ENCODE measurements at regions of chr12 and their contacts with region 1.

Region 1: DNA sequence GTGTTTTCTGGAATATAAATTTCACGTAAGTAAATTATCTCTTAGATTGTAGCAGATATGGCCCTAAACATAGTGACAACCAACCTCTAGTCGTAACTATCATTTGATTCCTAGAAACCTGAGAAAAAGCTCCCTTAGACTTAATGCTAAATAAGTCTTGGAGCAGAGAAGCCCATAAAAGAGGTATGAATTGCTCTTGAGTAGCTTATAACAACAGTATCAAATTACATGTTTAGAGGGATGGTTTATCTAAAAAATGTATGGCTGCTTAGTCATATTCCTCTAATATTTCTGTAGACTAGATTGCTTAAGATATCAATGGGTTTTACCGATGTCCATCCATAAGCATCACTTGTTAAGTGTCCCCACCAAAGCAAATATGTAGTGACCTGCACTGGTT is 259.7 kb downstream of the NELL2 start:
- DNase-seq: no peak
- ATAC-seq: no peak
- H3K4me3 ChIP-seq: no peak overlapping the region
- H3K4me3 Mint-ChIP-seq: no peak overlapping the region
- H3K27ac ChIP-seq: no peak overlapping the region
- H3K27ac Mint-ChIP-seq: no peak overlapping the region
- H3K4me1 ChIP-seq: no peaks in the 10 kb centered on the region
- H3K4me1 Mint-ChIP-seq: peaks cover 0 to 4% (median 1%) of the 10 kb centered on the region in 3 donors
- H3K27me3 ChIP-seq: no peaks in the 10 kb centered on the region
- H3K27me3 Mint-ChIP-seq: no peaks in the 10 kb centered on the region

Region 2: GRCh38 chr12:44709166-44709565 is 92.8 kb after region 1 on chr12:
- CTCF ChIA-PET with region 1: interaction called in 1 of 2 experiments, 10 read pairs
- POLR2A ChIA-PET with region 1: no interaction called
- DNase-seq: no peak
- ATAC-seq: no peak
- H3K4me3 ChIP-seq: no peak overlapping the region
- H3K4me3 Mint-ChIP-seq: no peak overlapping the region
- H3K27ac ChIP-seq: no peak overlapping the region
- H3K27ac Mint-ChIP-seq: peak overlapping the region in 1 of 2 donors; percentile 40
- H3K4me1 ChIP-seq: no peaks in the 10 kb centered on the region
- H3K4me1 Mint-ChIP-seq: peaks cover 4 to 9% (median 6%) of the 10 kb centered on the region in 3 donors
- H3K27me3 ChIP-seq: no peaks in the 10 kb centered on the region
- H3K27me3 Mint-ChIP-seq: no peaks in the 10 kb centered on the region

Measured in T-cell (primary cell).